CD8-positive, alpha-beta memory T cell (primary cell): ENCODE measurements at regions of chr19 and their contacts with region 1.

Region 1: GRCh38 chr19:47152224-47153017 is 21.8 kb downstream of the SAE1 start:
- DNase-seq: no peak
- H3K4me3 ChIP-seq: no peak overlapping the region
- H3K4me3 Mint-ChIP-seq: no peak overlapping the region
- H3K27ac ChIP-seq: no peak overlapping the region
- H3K27ac Mint-ChIP-seq: peak overlapping the region in 2 of 8 donors; percentile 58 to 69
- H3K4me1 ChIP-seq: peaks cover 39% of the 10 kb centered on the region
- H3K4me1 Mint-ChIP-seq: peaks cover 28 to 57% (median 51%) of the 10 kb centered on the region in 3 donors
- H3K27me3 ChIP-seq: no peaks in the 10 kb centered on the region
- H3K27me3 Mint-ChIP-seq: no peaks in the 10 kb centered on the region

Region 2: DNA sequence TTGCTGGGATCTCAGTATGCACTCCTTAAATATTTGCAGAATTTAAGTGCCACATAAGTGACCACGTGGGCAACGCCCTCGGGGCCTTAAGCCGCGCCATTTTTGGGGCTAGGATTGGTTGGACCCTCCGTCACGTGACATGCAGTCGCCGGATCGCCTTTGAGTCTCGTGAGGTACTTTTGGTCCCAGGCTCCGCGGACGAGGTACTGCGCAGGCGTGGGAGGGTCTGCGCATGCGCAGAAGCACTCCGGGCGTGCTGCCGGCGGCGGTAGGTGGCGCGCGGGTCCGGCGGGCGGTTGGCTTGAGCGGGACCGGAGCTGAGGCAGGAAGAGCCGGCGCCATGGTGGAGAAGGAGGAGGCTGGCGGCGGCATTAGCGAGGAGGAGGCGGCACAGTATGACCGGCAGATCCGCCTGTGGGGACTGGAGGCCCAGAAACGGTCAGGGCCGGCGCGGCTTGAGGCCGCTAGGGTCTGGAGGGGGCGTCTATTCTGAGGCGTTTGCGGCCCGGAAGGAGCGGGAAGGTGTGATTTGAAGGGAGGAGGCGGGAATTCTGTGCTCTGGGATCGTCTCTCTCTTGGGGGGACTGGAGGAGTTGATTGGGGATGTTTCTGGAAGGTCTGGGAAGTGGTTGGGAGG is 21.7 kb before region 1 on chr19 and contains the start of gene SAE1:
- CTCF ChIA-PET with region 1: interaction called, 20 read pairs
- POLR2A ChIA-PET with region 1: no interaction called
- DNase-seq: peak; percentile 85 to 94 (median 89)
- H3K4me3 ChIP-seq: peak within 1 kb of the TSS; percentile 97
- H3K4me3 Mint-ChIP-seq: peak within 1 kb of the TSS; percentile 96 to 100 (median 98)
- H3K27ac ChIP-seq: peak within 1 kb of the TSS; percentile 90
- H3K27ac Mint-ChIP-seq: peak within 1 kb of the TSS; percentile 74 to 99 (median 96)
- H3K4me1 ChIP-seq: peaks cover 33% of the 10 kb centered on the region
- H3K4me1 Mint-ChIP-seq: peaks cover 39 to 57% (median 52%) of the 10 kb centered on the region in 3 donors
- H3K27me3 ChIP-seq: no peaks in the 10 kb centered on the region
- H3K27me3 Mint-ChIP-seq: peaks cover 0 to 8% of the 10 kb centered on the region in 2 donors
- total RNA-seq, gene SAE1: 167 to 172 TPM

Region 3: DNA sequence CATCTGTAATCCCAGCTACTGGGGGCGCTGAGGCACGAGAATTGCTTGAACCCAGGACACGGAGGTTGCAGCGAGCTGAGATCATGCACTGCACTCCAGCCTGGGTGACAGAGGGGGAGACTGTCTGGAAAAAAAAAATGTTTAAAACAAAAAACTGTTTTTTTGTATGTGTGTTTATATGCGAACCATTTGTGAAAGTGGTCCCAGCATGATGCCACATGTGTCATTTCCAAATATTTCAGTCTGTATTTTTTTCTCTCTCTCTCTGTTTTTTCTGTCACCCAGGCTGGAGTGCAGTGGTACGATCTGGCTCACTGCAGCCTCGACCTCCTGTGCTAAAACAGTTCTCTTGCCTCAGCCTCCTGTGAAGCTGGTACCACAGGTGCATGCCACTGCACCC is 15.6 kb after region 1 on chr19:
- CTCF ChIA-PET with region 1: interaction called, 29 read pairs
- POLR2A ChIA-PET with region 1: interaction called, 4 read pairs
- DNase-seq: no peak
- H3K4me3 ChIP-seq: no peak overlapping the region
- H3K4me3 Mint-ChIP-seq: no peak overlapping the region
- H3K27ac ChIP-seq: no peak overlapping the region
- H3K27ac Mint-ChIP-seq: no peak overlapping the region
- H3K4me1 ChIP-seq: no peaks in the 10 kb centered on the region
- H3K4me1 Mint-ChIP-seq: peaks cover 8 to 14% (median 11%) of the 10 kb centered on the region in 3 donors
- H3K27me3 ChIP-seq: no peaks in the 10 kb centered on the region
- H3K27me3 Mint-ChIP-seq: no peaks in the 10 kb centered on the region

Region 4: DNA sequence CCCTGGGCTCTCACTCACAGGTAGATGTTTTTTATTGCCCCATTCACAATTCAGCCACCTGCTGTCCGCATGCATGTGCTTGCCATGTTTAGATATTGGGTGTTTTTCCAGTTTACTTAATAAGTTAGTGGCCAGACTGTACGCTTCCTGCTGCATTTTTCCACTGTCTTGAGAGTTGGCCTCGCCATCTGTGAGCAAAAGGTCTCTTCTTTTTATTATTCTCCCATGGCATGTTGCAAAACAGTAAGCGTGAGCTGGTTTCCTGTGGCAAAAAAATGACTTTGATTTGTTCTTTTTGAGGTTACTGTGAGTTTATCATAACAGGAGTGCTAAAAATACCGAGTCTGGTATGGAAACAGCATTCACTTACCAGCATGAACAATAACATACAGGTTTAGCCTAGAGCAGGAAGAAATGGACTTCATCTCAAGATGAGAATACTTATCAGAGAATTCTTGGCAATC is 24.2 kb after region 1 on chr19:
- CTCF ChIA-PET with region 1: interaction called, 16 read pairs
- POLR2A ChIA-PET with region 1: interaction called, 6 read pairs
- DNase-seq: peak in 3 of 5 donors; percentile 54 to 79 (median 63)
- H3K4me3 ChIP-seq: peak overlapping the region; percentile 17
- H3K4me3 Mint-ChIP-seq: peak overlapping the region; percentile 10 to 86 (median 82)
- H3K27ac ChIP-seq: no peak overlapping the region
- H3K27ac Mint-ChIP-seq: peak overlapping the region; percentile 68 to 97 (median 92)
- H3K4me1 ChIP-seq: peaks cover 58% of the 10 kb centered on the region
- H3K4me1 Mint-ChIP-seq: peaks cover 44 to 71% (median 66%) of the 10 kb centered on the region in 3 donors
- H3K27me3 ChIP-seq: no peaks in the 10 kb centered on the region
- H3K27me3 Mint-ChIP-seq: no peaks in the 10 kb centered on the region